Activated CD4-positive, alpha-beta T cell treated with anti-CD3 and anti-CD28 coated beads for 36 hours (primary cell): ENCODE measurements at regions of chr4 and their contacts with region 1.

Region 1: DNA sequence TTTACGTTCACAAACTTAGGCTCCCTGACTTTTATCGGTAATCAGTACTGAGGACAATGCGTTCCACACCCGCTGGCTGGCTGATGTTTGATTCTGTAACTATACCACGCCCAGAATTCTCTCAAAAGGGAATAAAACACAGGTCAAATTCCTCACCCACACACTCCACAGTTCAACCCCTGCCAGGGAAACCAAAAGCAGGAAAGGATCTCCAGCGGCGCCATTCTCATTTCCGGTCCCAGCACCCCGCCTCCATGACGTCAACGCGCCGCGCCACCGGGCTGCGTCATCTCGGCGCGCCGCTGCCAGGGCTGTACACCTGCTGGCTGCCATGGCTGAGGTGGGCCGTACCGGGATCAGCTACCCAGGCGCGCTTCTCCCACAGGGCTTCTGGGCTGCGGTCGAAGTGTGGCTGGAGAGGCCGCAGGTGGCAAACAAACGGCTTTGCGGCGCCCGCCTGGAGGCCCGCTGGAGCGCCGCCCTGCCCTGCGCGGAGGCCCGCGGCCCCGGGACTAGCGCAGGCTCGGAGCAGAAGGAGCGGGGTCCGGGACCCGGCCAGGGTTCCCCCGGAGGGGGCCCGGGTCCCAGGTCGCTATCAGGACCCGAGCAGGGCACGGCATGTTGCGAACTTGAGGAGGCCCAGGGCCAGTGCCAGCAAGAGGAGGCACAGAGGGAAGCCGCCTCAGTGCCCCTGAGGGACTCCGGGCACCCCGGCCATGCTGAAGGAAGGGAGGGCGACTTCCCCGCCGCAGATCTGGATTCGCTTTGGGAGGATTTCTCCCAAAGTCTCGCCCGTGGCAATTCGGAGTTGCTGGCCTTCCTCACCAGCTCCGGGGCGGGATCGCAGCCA is at the starts of genes ACOX3 and TRMT44:
- DNase-seq: peak; percentile 95
- ATAC-seq: peak; percentile 89
- H3K4me3 Mint-ChIP-seq: peak within 1 kb of the TSS; percentile 93
- H3K27ac Mint-ChIP-seq: peak within 1 kb of the TSS; percentile 99
- H3K4me1 Mint-ChIP-seq: peaks cover 75% of the 10 kb centered on the region
- H3K27me3 Mint-ChIP-seq: no peaks in the 10 kb centered on the region
- total RNA-seq, gene ACOX3: 20.5 to 29.3 TPM
- total RNA-seq, gene TRMT44: 20.1 to 24.5 TPM

Region 2: GRCh38 chr4:7973545-7973981 is 467.2 kb before region 1 on chr4:
- CTCF ChIA-PET with region 1: no interaction called
- POLR2A ChIA-PET with region 1: no interaction called
- intact Hi-C with region 1: loop called in 1 of 2 experiments (anchors 10 kb)
- DNase-seq: peak; percentile 41
- ATAC-seq: peak; percentile 10
- H3K4me3 Mint-ChIP-seq: no peak overlapping the region
- H3K27ac Mint-ChIP-seq: peak overlapping the region; percentile 52
- H3K4me1 Mint-ChIP-seq: peaks cover 44% of the 10 kb centered on the region
- H3K27me3 Mint-ChIP-seq: no peaks in the 10 kb centered on the region

Region 3: GRCh38 chr4:8144359-8144758 is 296.4 kb before region 1 on chr4:
- CTCF ChIA-PET with region 1: no interaction called
- POLR2A ChIA-PET with region 1: no interaction called
- intact Hi-C with region 1: no loop called
- DNase-seq: no peak
- ATAC-seq: no peak
- H3K4me3 Mint-ChIP-seq: no peak overlapping the region
- H3K27ac Mint-ChIP-seq: no peak overlapping the region
- H3K4me1 Mint-ChIP-seq: no peaks in the 10 kb centered on the region
- H3K27me3 Mint-ChIP-seq: peaks cover 3% of the 10 kb centered on the region

Region 4: GRCh38 chr4:8428293-8429097 is 12.2 kb before region 1 on chr4:
- CTCF ChIA-PET with region 1: interaction called, 6 read pairs
- POLR2A ChIA-PET with region 1: interaction called, 3 read pairs
- intact Hi-C with region 1: loop called (anchors 1 kb)
- DNase-seq: peak; percentile 93
- ATAC-seq: peak; percentile 95
- H3K4me3 Mint-ChIP-seq: peak overlapping the region; percentile 93
- H3K27ac Mint-ChIP-seq: peak overlapping the region; percentile 91
- H3K4me1 Mint-ChIP-seq: peaks cover 27% of the 10 kb centered on the region
- H3K27me3 Mint-ChIP-seq: no peaks in the 10 kb centered on the region

Region 5: DNA sequence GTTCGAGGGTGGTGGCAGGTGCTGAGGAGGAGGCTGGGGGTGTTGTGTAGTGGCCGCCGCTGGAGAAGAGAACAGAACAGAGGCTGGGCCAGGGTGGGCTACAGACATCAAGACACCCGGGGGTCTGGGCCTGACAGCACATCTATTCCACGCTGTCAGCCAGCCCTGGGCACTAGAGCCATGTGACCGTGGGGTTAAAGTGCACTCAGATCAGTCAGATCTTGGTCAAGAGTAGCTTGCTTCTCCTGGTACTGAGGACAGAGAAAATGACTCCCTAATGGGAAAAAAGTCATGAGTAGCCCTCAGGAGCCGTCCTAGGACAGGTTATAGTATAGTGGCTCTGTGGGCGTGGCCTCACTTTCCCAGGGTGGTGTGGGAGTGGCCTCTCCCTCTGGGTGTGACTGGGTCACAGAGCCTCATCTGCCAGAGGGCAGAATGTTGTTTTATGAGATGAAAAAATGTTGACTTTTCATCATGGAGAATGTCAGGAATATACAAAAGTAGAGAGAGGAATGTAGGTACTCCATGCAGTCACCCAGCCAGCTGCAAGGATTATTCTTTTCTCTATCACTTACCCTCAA is 19.2 kb after region 1 on chr4:
- CTCF ChIA-PET with region 1: no interaction called
- POLR2A ChIA-PET with region 1: no interaction called
- intact Hi-C with region 1: no loop called
- DNase-seq: no peak
- ATAC-seq: no peak
- H3K4me3 Mint-ChIP-seq: no peak overlapping the region
- H3K27ac Mint-ChIP-seq: no peak overlapping the region
- H3K4me1 Mint-ChIP-seq: no peaks in the 10 kb centered on the region
- H3K27me3 Mint-ChIP-seq: no peaks in the 10 kb centered on the region